Dorsolateral prefrontal cortex (tissue), 120 donors: ENCODE measurements at regions of chr12 and their contacts with region 1.

Region 1: DNA sequence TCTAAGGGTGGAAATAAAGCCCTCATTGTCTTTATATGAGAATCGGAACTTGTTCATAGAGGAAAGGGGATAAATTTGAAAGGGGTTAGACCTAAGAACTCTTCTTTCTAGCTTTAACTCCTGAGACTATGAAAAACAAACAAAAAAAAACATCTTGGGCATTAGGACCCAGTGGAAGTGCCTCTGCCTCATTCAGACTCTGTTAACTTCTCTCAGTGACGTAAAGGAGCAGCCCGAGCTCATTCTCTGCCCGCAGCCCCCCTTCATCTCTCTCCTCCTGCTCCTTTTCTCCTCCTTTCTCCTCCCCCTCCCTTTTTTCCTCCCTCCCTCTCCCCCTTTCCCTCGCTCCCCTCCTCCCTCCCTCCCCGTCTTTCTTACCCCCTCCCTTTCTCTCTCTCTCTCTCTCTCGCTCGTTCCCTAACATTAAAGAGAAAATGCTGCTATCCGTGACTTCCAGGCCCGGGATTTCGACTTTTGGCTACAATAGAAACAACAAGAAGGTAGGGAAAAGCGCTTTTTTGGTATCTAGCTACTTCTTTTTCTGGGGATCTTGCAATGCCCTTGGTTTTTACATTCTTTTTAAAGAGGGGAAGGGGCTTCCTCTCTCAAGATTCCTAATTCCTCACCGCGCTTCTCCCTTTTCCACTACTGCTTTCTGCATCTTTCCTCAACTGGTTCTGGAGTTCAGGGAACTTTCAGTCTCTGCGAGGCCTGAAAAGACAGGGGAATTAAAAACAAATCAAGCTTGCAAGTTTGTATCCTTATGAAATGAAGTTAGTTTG is at the start of gene RBMS2:
- DNase-seq: peak; percentile 36 to 87 (median 74)
- H3K4me3 ChIP-seq: peak within 1 kb of the TSS; percentile 31 to 78 (median 63)
- H3K27ac ChIP-seq: peak within 1 kb of the TSS; percentile 14 to 94 (median 87)
- H3K27me3 ChIP-seq: no peaks in the 10 kb centered on the region
- CTCF ChIP-seq: peak in 3 of 56 donors; percentile 4 to 12 (median 8)
- total RNA-seq, gene RBMS2: 10.8 to 44.5 (median 19.9) TPM

Region 2: DNA sequence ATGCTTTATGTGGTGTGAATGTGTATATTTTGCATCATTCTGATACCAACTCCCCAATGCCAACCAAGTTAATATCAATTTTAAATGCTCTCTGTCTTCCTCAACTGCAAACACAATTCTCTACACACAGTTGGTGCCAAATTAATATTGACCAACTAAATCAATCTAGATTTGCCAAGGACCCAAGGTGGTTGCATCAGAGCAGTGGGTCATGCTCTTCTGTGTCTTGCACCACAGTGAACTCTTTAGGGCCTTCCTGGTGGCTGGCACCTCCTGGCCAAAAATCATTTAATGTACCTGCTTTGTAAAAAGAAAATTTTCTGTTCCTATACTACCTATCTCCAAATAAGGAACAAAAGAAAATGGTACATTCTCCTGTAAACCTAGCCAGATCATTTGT is 240.9 kb before region 1 on chr12:
- intact Hi-C with region 1: no loop called
- DNase-seq: no peak
- H3K4me3 ChIP-seq: no peak overlapping the region
- H3K27ac ChIP-seq: no peak overlapping the region
- H3K27me3 ChIP-seq: no peaks in the 10 kb centered on the region
- CTCF ChIP-seq: no peak

Region 3: DNA sequence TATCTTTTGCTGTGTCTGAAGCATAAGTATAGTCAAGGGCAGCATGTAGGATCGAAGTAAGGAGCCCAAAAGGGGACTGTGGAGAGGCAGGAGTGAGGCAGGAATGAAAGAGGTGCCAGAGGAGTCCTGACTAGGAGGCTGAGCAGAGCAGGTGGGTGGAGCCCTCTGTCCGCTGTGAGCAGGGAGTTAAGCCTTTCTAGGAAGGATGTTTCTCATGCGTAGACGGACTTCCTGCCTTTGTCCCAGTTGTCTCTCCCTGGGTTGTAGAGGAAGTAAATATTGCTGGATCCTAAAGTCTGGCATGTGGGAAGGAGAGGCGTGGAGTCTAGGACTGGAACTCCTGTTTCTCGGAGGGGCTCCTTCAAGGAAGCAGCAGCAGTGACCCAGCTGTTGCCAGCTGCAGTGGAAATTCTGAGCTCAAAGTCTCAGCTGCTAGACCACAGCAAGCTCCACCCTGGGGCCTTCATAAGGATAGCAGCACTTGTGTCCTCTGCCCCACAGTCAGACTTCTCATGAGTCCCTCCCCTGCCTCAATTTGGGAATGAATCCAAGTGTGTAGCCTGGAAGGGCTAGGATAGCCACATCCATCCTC is 43.8 kb after region 1 on chr12:
- intact Hi-C with region 1: loop called (anchors 5 kb)
- DNase-seq: no peak
- H3K4me3 ChIP-seq: peak overlapping the region in 1 of 59 donors; percentile 5
- H3K27ac ChIP-seq: peak overlapping the region in 36 of 59 donors; percentile 4 to 76 (median 50)
- H3K27me3 ChIP-seq: no peaks in the 10 kb centered on the region
- CTCF ChIP-seq: no peak

Region 4: DNA sequence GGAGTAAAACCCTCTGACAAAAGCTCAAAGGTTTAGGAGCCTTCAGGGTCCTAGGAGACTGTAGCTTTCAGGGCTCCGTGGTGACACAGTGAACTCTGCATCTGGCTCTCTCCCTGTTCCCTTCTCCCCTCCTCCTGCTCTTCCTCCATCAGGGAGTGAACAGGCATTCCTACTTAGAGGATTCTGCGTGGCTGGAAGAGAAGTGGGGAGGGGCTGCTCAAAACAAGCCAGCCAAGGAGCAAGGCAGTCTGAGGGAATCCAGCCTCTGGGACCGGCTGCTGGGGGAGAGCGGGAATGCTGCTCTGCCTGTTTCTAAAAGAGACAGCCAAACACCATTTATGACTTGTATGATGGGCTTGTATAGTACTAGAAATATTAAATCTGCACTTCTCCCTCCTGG is 49.3 kb after region 1 on chr12:
- intact Hi-C with region 1: loop called (anchors 5 kb)
- DNase-seq: no peak
- H3K4me3 ChIP-seq: peak overlapping the region in 3 of 59 donors; percentile 30 to 35 (median 30)
- H3K27ac ChIP-seq: peak overlapping the region in 28 of 59 donors; percentile 0 to 71 (median 50)
- H3K27me3 ChIP-seq: no peaks in the 10 kb centered on the region
- CTCF ChIP-seq: no peak

Region 5: DNA sequence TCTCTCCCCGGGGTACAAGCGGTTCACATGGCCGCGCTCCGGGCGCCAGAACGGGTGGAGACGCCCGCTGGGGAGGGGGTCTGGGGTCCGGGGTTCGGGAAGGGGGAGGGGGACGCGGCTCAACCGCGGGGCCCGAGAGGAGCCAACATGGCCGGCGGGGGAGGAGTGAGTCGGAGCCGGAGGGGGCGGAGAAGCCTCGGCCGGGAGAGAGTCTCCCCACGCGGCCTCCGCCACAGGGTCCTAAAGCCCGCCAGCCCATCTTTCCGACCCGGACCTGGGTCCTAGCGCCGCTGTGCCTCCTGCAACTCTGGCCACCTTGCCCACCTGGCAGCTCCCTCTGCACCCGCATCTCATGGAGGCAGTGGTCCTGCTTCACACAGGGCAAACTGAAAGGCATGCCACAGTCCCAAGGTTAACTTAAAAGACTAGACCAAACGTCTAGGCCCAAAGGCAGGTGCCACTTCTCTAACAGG is 108.4 kb after region 1 on chr12 and contains the start of gene BAZ2A:
- intact Hi-C with region 1: loop called (anchors 2 to 5 kb)
- DNase-seq: peak; percentile 89 to 98 (median 96)
- H3K4me3 ChIP-seq: peak within 1 kb of the TSS; percentile 57 to 100 (median 96)
- H3K27ac ChIP-seq: peak within 1 kb of the TSS; percentile 72 to 99 (median 94)
- H3K27me3 ChIP-seq: no peaks in the 10 kb centered on the region
- CTCF ChIP-seq: peak in 27 of 56 donors; percentile 4 to 45 (median 22)
- total RNA-seq, gene BAZ2A: 58.5 to 126 (median 86.8) TPM

Region 6: GRCh38 chr12:56636675-56637540 is 115.1 kb after region 1 on chr12:
- intact Hi-C with region 1: loop called in 1 of 2 experiments (anchors 2 kb)
- DNase-seq: peak; percentile 83 to 98 (median 95)
- H3K4me3 ChIP-seq: peak overlapping the region; percentile 46 to 87 (median 78)
- H3K27ac ChIP-seq: peak overlapping the region; percentile 87 to 99 (median 95)
- H3K27me3 ChIP-seq: no peaks in the 10 kb centered on the region
- CTCF ChIP-seq: peak; percentile 32 to 90 (median 72)